Stomach (tissue), 19 donors: ENCODE measurements at regions of chr14 and their contacts with region 1.

Region 1: GRCh38 chr14:68816262-68816942 is 23.5 kb upstream of the ZFP36L1 start:
- DNase-seq: peak; percentile 91 to 97
- H3K4me3 ChIP-seq: peak overlapping the region; percentile 32 to 53 (median 44)
- H3K27ac ChIP-seq: peak overlapping the region; percentile 92 to 99 (median 97)
- H3K4me1 ChIP-seq: peaks cover 37 to 82% (median 64%) of the 10 kb centered on the region in 4 donors
- H3K27me3 ChIP-seq: no peaks in the 10 kb centered on the region
- CTCF ChIP-seq: peak in 6 of 7 experiments; percentile 64 to 98 (median 94)
- EP300 ChIP-seq: no peak
- POLR2A ChIP-seq: no peak

Region 2: GRCh38 chr14:68248481-68249255 is 567.7 kb before region 1 on chr14:
- intact Hi-C with region 1: loop called (anchors 5 kb)
- DNase-seq: peak in 1 of 2 donors; percentile 92
- H3K4me3 ChIP-seq: no peak overlapping the region
- H3K27ac ChIP-seq: peak overlapping the region in 4 of 5 donors; percentile 77 to 89 (median 84)
- H3K4me1 ChIP-seq: peaks cover 52 to 88% (median 68%) of the 10 kb centered on the region in 4 donors
- H3K27me3 ChIP-seq: no peaks in the 10 kb centered on the region
- CTCF ChIP-seq: peak in 5 of 7 experiments; percentile 25 to 69 (median 57)
- EP300 ChIP-seq: no peak
- POLR2A ChIP-seq: no peak

Region 3: DNA sequence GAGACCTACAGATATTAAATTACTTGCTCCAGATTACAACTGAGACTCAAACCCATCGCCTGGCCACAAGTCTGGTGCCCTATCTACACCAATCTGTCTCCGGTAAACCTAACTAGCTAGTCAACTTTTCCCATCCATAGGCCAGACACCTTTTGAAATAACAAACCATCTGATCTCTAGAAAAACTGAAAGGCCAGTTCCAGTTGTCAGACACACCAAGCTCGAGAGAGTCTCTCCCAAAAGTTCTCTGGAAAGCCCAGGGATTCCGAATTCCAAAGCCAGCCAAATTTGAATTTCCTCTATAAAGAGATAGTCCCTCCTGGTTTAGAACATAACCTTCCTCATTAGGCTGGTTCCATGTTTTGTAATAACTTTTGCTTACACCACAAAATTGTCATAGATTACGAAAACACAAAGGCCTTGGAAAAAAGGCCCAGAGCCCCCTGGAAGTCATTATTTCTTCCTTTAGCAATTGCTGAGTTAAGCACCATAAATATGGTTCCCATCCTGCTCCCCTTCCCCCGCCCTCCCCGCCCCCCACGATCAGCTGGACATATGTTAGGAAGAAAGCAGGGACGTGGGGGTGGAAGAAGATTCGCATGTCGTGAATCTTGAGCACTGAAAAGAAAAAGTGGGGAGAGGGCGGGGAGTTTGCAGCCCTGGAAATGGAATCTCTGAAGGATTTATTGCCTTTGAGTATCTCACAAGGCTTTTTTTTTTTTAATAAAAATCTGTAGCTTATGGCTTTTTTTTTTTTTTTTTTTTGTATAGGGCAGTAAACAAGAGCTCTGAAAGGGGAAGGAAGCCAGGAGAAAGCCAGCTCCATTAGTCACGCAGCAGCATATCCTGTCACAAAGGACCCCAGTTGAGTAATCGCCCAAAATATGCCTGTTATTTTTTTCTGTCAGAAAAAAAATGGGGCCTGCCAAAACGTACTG is 134.0 kb before region 1 on chr14:
- intact Hi-C with region 1: no loop called
- DNase-seq: peak in 1 of 2 donors; percentile 91
- H3K4me3 ChIP-seq: no peak overlapping the region
- H3K27ac ChIP-seq: peak overlapping the region in 4 of 5 donors; percentile 70 to 82 (median 76)
- H3K4me1 ChIP-seq: peaks cover 39 to 84% (median 63%) of the 10 kb centered on the region in 4 donors
- H3K27me3 ChIP-seq: no peaks in the 10 kb centered on the region
- CTCF ChIP-seq: no peak
- EP300 ChIP-seq: no peak
- POLR2A ChIP-seq: no peak

Region 4: DNA sequence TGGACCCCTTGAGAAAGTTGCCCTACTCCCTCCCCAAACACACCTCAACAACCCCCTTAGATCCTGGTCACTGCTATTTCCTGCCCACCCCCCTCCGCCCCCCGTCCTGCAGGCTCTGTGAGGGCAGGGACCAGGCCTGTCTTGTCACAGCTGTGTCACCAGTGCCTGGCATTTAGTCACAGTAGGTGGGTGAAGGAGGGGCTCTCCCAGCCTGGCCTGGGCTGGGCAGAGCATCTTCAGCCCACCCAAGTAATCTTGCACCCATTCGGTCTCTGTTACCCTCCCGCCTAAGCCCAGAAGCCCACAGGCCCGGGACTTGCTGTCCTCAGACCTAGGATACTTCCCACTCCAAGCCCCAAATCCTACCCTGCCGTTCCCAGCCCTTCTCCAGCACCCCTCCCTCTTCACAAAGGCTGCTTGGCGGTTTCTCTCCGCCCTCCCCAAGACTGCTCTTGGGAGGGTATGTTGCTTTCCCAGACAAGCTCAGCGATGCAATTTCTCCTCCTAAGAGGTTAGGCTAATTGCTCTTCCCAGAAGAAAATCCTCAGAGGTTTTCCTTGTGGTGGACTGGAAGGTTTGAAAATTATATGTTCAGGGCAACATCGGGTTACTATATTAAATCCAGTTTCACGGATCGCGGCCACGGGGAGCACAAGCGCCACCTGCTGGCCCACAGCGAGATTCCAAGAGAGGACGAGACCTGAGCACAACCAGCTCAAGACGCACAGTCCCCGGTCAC is 27.2 kb after region 1 on chr14:
- intact Hi-C with region 1: no loop called
- DNase-seq: peak; percentile 88 to 94
- H3K4me3 ChIP-seq: peak overlapping the region; percentile 24 to 38 (median 32)
- H3K27ac ChIP-seq: peak overlapping the region in 3 of 5 donors; percentile 34 to 82 (median 63)
- H3K4me1 ChIP-seq: peaks cover 7 to 39% (median 21%) of the 10 kb centered on the region in 4 donors
- H3K27me3 ChIP-seq: no peaks in the 10 kb centered on the region
- CTCF ChIP-seq: peak in 5 of 7 experiments; percentile 66 to 90 (median 84)
- EP300 ChIP-seq: no peak
- POLR2A ChIP-seq: no peak